CD4-positive, alpha-beta T cell (primary cell): ENCODE measurements at regions of chr6 and their contacts with region 1.

Region 1: GRCh38 chr6:31366693-31367470 is 9.9 kb upstream of the HLA-B start:
- DNase-seq: peak; percentile 72 to 96 (median 88)
- ATAC-seq: peak; percentile 97
- H3K4me3 ChIP-seq: peak overlapping the region; percentile 59
- H3K4me3 Mint-ChIP-seq: peak overlapping the region; percentile 81
- H3K27ac ChIP-seq: no peak overlapping the region
- H3K27ac Mint-ChIP-seq: peak overlapping the region; percentile 38
- H3K4me1 ChIP-seq: peaks cover 9% of the 10 kb centered on the region
- H3K4me1 Mint-ChIP-seq: peaks cover 16% of the 10 kb centered on the region
- H3K27me3 ChIP-seq: no peaks in the 10 kb centered on the region
- H3K27me3 Mint-ChIP-seq: peaks cover 32% of the 10 kb centered on the region
- CTCF ChIP-seq: peak; percentile 84

Region 2: DNA sequence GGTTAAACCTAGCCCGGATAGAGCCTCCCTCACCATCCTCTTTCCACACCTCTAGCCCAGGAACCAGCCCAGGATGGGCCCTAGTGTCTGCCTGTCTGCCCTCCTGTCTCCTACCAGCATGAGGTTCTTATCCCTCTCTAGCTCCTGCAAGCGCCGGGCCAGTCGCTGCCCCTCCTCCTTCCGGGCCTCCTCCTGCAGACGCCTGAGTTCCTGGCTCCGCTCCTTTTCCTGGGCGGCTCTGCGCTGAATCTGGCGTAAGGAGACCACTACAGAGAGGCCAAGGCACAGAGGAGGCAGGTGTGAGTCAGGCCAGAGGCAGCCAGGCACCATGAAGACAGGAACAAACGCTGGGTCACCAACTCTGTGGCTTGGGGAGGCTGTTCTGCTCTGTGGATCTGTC is 223.7 kb before region 1 on chr6:
- CTCF ChIA-PET with region 1: interaction called, 19 read pairs
- POLR2A ChIA-PET with region 1: interaction called, 5 read pairs
- intact Hi-C with region 1: no loop called
- DNase-seq: no peak
- ATAC-seq: no peak
- H3K4me3 ChIP-seq: no peak overlapping the region
- H3K4me3 Mint-ChIP-seq: no peak overlapping the region
- H3K27ac ChIP-seq: no peak overlapping the region
- H3K27ac Mint-ChIP-seq: no peak overlapping the region
- H3K4me1 ChIP-seq: no peaks in the 10 kb centered on the region
- H3K4me1 Mint-ChIP-seq: no peaks in the 10 kb centered on the region
- H3K27me3 ChIP-seq: no peaks in the 10 kb centered on the region
- H3K27me3 Mint-ChIP-seq: no peaks in the 10 kb centered on the region
- CTCF ChIP-seq: no peak

Region 3: GRCh38 chr6:31203345-31203979 is 163.4 kb before region 1 on chr6:
- CTCF ChIA-PET with region 1: interaction called, 97 read pairs
- POLR2A ChIA-PET with region 1: interaction called, 101 read pairs
- intact Hi-C with region 1: no loop called
- DNase-seq: peak in 12 of 14 experiments; percentile 28 to 87 (median 52)
- ATAC-seq: peak; percentile 71
- H3K4me3 ChIP-seq: peak overlapping the region; percentile 68
- H3K4me3 Mint-ChIP-seq: peak overlapping the region; percentile 87
- H3K27ac ChIP-seq: peak overlapping the region; percentile 71 to 73
- H3K27ac Mint-ChIP-seq: peak overlapping the region; percentile 93
- H3K4me1 ChIP-seq: peaks cover 69% of the 10 kb centered on the region
- H3K4me1 Mint-ChIP-seq: peaks cover 65% of the 10 kb centered on the region
- H3K27me3 ChIP-seq: no peaks in the 10 kb centered on the region
- H3K27me3 Mint-ChIP-seq: no peaks in the 10 kb centered on the region
- CTCF ChIP-seq: no peak

Region 4: DNA sequence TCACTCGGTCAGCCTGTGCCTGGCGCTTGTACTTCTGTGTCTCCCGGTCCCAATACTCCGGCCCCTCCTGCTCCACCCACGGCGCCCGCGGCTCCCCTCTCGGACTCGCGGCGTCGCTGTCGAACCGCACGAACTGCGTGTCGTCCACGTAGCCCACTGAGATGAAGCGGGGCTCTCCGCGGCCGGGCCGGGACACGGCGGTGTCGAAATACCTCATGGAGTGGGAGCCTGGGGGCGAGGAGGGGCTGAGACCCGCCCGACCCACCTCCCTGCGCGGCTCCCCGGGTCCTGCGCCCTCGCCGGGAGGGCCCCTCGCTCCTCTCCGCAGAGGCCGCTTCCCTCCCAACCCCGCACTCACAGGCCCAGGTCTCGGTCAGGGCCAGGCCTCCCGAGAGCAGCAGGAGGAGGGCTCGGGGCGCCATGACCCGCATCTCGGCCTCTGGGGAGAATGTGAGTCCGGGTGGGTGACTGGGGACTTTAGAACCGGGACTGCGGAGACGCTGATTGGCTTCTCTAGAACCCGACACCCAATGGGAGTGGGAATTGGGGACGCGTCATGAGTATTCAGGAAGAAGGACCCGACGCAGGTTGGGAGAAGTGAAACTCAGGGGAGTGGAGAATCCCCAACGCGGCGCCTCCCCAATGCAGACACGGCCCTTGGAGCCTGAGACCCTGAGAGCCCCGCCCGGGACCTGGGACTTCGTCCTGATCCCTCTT is 95.1 kb before region 1 on chr6 and contains the start of gene HLA-C:
- CTCF ChIA-PET with region 1: interaction called, 3 read pairs
- POLR2A ChIA-PET with region 1: interaction called, 19 read pairs
- intact Hi-C with region 1: no loop called
- DNase-seq: peak; percentile 80 to 98 (median 89)
- ATAC-seq: peak; percentile 89
- H3K4me3 ChIP-seq: peak within 1 kb of the TSS; percentile 79
- H3K4me3 Mint-ChIP-seq: peak within 1 kb of the TSS; percentile 98
- H3K27ac ChIP-seq: peak within 1 kb of the TSS; percentile 96 to 98
- H3K27ac Mint-ChIP-seq: peak within 1 kb of the TSS; percentile 100
- H3K4me1 ChIP-seq: peaks cover 54% of the 10 kb centered on the region
- H3K4me1 Mint-ChIP-seq: peaks cover 65% of the 10 kb centered on the region
- H3K27me3 ChIP-seq: no peaks in the 10 kb centered on the region
- H3K27me3 Mint-ChIP-seq: no peaks in the 10 kb centered on the region
- CTCF ChIP-seq: no peak
- total RNA-seq, gene HLA-C: 1,977 to 1,996 TPM

Region 5: GRCh38 chr6:31332637-31333602 is 34.0 kb before region 1 on chr6:
- CTCF ChIA-PET with region 1: interaction called, 14 read pairs
- POLR2A ChIA-PET with region 1: no interaction called
- intact Hi-C with region 1: no loop called
- DNase-seq: peak in 6 of 14 experiments; percentile 8 to 80 (median 46)
- ATAC-seq: peak; percentile 88
- H3K4me3 ChIP-seq: no peak overlapping the region
- H3K4me3 Mint-ChIP-seq: peak overlapping the region; percentile 0
- H3K27ac ChIP-seq: no peak overlapping the region
- H3K27ac Mint-ChIP-seq: peak overlapping the region; percentile 16
- H3K4me1 ChIP-seq: peaks cover 3% of the 10 kb centered on the region
- H3K4me1 Mint-ChIP-seq: peaks cover 19% of the 10 kb centered on the region
- H3K27me3 ChIP-seq: no peaks in the 10 kb centered on the region
- H3K27me3 Mint-ChIP-seq: no peaks in the 10 kb centered on the region
- CTCF ChIP-seq: no peak

Region 6: GRCh38 chr6:31702819-31703522 is 336.1 kb after region 1 on chr6 and contains the start of gene ABHD16A:
- CTCF ChIA-PET with region 1: no interaction called
- POLR2A ChIA-PET with region 1: no interaction called
- intact Hi-C with region 1: no loop called
- DNase-seq: peak; percentile 94 to 99 (median 97)
- ATAC-seq: peak; percentile 91
- H3K4me3 ChIP-seq: peak within 1 kb of the TSS; percentile 67
- H3K4me3 Mint-ChIP-seq: peak within 1 kb of the TSS; percentile 94
- H3K27ac ChIP-seq: peak within 1 kb of the TSS; percentile 95 to 98
- H3K27ac Mint-ChIP-seq: peak within 1 kb of the TSS; percentile 94
- H3K4me1 ChIP-seq: peaks cover 35% of the 10 kb centered on the region
- H3K4me1 Mint-ChIP-seq: peaks cover 33% of the 10 kb centered on the region
- H3K27me3 ChIP-seq: no peaks in the 10 kb centered on the region
- H3K27me3 Mint-ChIP-seq: no peaks in the 10 kb centered on the region
- CTCF ChIP-seq: no peak
- total RNA-seq, gene ABHD16A: 52.3 to 59.3 TPM